Adrenal gland (tissue), 19 donors: ENCODE measurements at regions of chr2 and their contacts with region 1.

Region 1: GRCh38 chr2:28958689-28959088 is 22.4 kb upstream of the TOGARAM2 start:
- DNase-seq: peak; percentile 47 to 79 (median 60)
- H3K4me3 ChIP-seq: no peak overlapping the region
- H3K27ac ChIP-seq: no peak overlapping the region
- H3K4me1 ChIP-seq: no peaks in the 10 kb centered on the region
- H3K27me3 ChIP-seq: no peaks in the 10 kb centered on the region
- CTCF ChIP-seq: peak; percentile 57 to 81 (median 75)
- POLR2A ChIP-seq: no peak

Region 2: GRCh38 chr2:29196792-29197788 is 238.4 kb after region 1 on chr2:
- intact Hi-C with region 1: loop called (anchors 2 to 5 kb)
- DNase-seq: peak; percentile 57 to 81 (median 66)
- H3K4me3 ChIP-seq: no peak overlapping the region
- H3K27ac ChIP-seq: no peak overlapping the region
- H3K4me1 ChIP-seq: no peaks in the 10 kb centered on the region
- H3K27me3 ChIP-seq: no peaks in the 10 kb centered on the region
- CTCF ChIP-seq: peak; percentile 57 to 81 (median 70)
- POLR2A ChIP-seq: no peak

Region 3: GRCh38 chr2:29309090-29310029 is 350.7 kb after region 1 on chr2:
- intact Hi-C with region 1: loop called in 1 of 2 experiments (anchors 10 kb)
- DNase-seq: peak; percentile 41 to 81 (median 67)
- H3K4me3 ChIP-seq: no peak overlapping the region
- H3K27ac ChIP-seq: no peak overlapping the region
- H3K4me1 ChIP-seq: peaks cover 0 to 10% of the 10 kb centered on the region in 2 donors
- H3K27me3 ChIP-seq: peaks cover 5% of the 10 kb centered on the region
- CTCF ChIP-seq: peak; percentile 51 to 76 (median 66)
- POLR2A ChIP-seq: no peak

Region 4: GRCh38 chr2:30072250-30072842 is 1113.7 kb after region 1 on chr2:
- intact Hi-C with region 1: loop called in 1 of 2 experiments (anchors 5 kb)
- DNase-seq: peak; percentile 70 to 91 (median 74)
- H3K4me3 ChIP-seq: no peak overlapping the region
- H3K27ac ChIP-seq: no peak overlapping the region
- H3K4me1 ChIP-seq: no peaks in the 10 kb centered on the region
- H3K27me3 ChIP-seq: peaks cover 4% of the 10 kb centered on the region
- CTCF ChIP-seq: peak; percentile 62 to 76 (median 71)
- POLR2A ChIP-seq: no peak